Upper lobe of right lung (tissue), 1 donor: ENCODE measurements at regions of chr19 and their contacts with region 1.

Region 1: GRCh38 chr19:33778089-33778791 is 18.4 kb upstream of the KCTD15 start:
- DNase-seq: peak; percentile 93
- ATAC-seq: peak; percentile 97
- H3K4me3 ChIP-seq: no peak overlapping the region
- H3K27ac ChIP-seq: no peak overlapping the region
- H3K4me1 ChIP-seq: no peaks in the 10 kb centered on the region
- H3K27me3 ChIP-seq: peaks cover 18% of the 10 kb centered on the region
- CTCF ChIP-seq: peak; percentile 100

Region 2: GRCh38 chr19:33998739-33999345 is 220.6 kb after region 1 on chr19:
- intact Hi-C with region 1: loop called (anchors 5 kb)
- DNase-seq: no peak
- ATAC-seq: no peak
- H3K4me3 ChIP-seq: no peak overlapping the region
- H3K27ac ChIP-seq: no peak overlapping the region
- H3K4me1 ChIP-seq: no peaks in the 10 kb centered on the region
- H3K27me3 ChIP-seq: no peaks in the 10 kb centered on the region
- CTCF ChIP-seq: peak; percentile 60